Caco-2 (cell line): ENCODE measurements at regions of chr17 and their contacts with region 1.

Region 1: DNA sequence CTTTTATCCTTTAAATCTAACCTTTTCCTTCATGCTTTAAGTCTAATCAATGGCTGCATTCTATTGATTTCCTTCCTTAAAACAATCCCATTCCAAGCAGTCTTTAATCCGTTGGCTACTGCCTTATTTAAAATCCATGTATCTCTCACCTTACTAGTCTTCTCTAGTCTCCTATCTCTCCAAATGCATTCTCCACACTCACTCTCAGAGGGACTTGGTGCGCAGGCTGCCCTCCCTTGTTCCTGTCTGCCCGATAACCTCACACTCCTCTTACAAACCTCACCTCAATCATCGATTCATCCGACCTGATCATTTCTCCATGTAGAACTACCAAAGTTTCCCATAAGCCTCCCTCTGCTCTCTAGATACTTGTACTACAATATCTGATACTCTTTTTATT is 23.1 kb downstream of the PSMD12 start:
- DNase-seq: no peak
- H3K4me3 ChIP-seq: no peak overlapping the region
- H3K4me3 Mint-ChIP-seq: no peak overlapping the region
- H3K27ac Mint-ChIP-seq: no peak overlapping the region
- H3K4me1 ChIP-seq: no peaks in the 10 kb centered on the region
- H3K4me1 Mint-ChIP-seq: no peaks in the 10 kb centered on the region
- H3K27me3 ChIP-seq: no peaks in the 10 kb centered on the region
- H3K27me3 Mint-ChIP-seq: no peaks in the 10 kb centered on the region
- CTCF ChIP-seq: no peak

Region 2: GRCh38 chr17:67459870-67460455 is 116.7 kb after region 1 on chr17:
- CTCF ChIA-PET with region 1: no interaction called
- POLR2A ChIA-PET with region 1: no interaction called
- intact Hi-C with region 1: no loop called
- DNase-seq: no peak
- H3K4me3 ChIP-seq: no peak overlapping the region
- H3K4me3 Mint-ChIP-seq: no peak overlapping the region
- H3K27ac Mint-ChIP-seq: no peak overlapping the region
- H3K4me1 ChIP-seq: no peaks in the 10 kb centered on the region
- H3K4me1 Mint-ChIP-seq: no peaks in the 10 kb centered on the region
- H3K27me3 ChIP-seq: no peaks in the 10 kb centered on the region; the same call in 1 of the 2 replicates
- H3K27me3 Mint-ChIP-seq: peaks cover 3% of the 10 kb centered on the region
- CTCF ChIP-seq: no peak

Region 3: DNA sequence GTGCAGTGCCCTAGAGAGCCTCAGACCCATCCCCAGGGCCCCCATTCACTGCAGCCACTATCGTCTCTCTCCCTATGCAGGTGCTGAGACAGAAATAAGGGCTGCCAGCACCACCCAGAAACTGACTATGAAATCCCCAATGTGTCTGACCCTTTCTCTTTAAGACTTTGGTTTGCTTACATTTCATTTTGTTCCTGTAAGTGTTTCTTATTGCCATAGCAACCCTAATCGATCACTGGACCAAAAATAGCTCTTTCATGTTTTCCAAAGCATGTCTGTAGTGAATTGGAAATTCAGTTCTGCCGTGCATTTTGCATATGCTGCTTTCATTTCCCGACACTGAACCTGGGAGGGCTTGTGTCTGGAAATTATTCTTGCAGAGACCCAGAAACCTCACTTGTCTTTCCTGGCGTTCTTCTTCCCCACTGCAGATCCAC is 225.8 kb after region 1 on chr17:
- CTCF ChIA-PET with region 1: no interaction called
- POLR2A ChIA-PET with region 1: interaction called, 10 read pairs
- intact Hi-C with region 1: no loop called
- DNase-seq: no peak
- H3K4me3 ChIP-seq: no peak overlapping the region
- H3K4me3 Mint-ChIP-seq: no peak overlapping the region
- H3K27ac Mint-ChIP-seq: no peak overlapping the region
- H3K4me1 ChIP-seq: no peaks in the 10 kb centered on the region
- H3K4me1 Mint-ChIP-seq: no peaks in the 10 kb centered on the region
- H3K27me3 ChIP-seq: no peaks in the 10 kb centered on the region
- H3K27me3 Mint-ChIP-seq: peaks cover 14% of the 10 kb centered on the region
- CTCF ChIP-seq: no peak

Region 4: GRCh38 chr17:67615011-67615561 is 271.8 kb after region 1 on chr17:
- CTCF ChIA-PET with region 1: no interaction called
- POLR2A ChIA-PET with region 1: no interaction called
- intact Hi-C with region 1: no loop called
- DNase-seq: no peak
- H3K4me3 ChIP-seq: no peak overlapping the region
- H3K4me3 Mint-ChIP-seq: no peak overlapping the region
- H3K27ac Mint-ChIP-seq: no peak overlapping the region
- H3K4me1 ChIP-seq: no peaks in the 10 kb centered on the region
- H3K4me1 Mint-ChIP-seq: no peaks in the 10 kb centered on the region
- H3K27me3 ChIP-seq: no peaks in the 10 kb centered on the region
- H3K27me3 Mint-ChIP-seq: no peaks in the 10 kb centered on the region
- CTCF ChIP-seq: no peak